ENCODE measurements at regions of chr11 and their contacts with region 1.

Region 1: GRCh38 chr11:9663699-9664275 is at the start of gene SWAP70:
- DNase-seq: peak; percentile 91
- H3K4me3 ChIP-seq: peak within 1 kb of the TSS; percentile 96
- H3K27ac ChIP-seq: peak within 1 kb of the TSS; percentile 97
- H3K4me1 ChIP-seq: peaks cover 37% of the 10 kb centered on the region
- H3K27me3 ChIP-seq: no peaks in the 10 kb centered on the region
- CTCF ChIP-seq: peak; percentile 74
- total RNA-seq, gene SWAP70: 20.6 TPM

Region 2: GRCh38 chr11:9716275-9717039 is 52.7 kb after region 1 on chr11:
- intact Hi-C with region 1: loop called (anchors 10 kb)
- DNase-seq: no peak
- H3K4me3 ChIP-seq: no peak overlapping the region
- H3K27ac ChIP-seq: peak overlapping the region; percentile 82
- H3K4me1 ChIP-seq: peaks cover 75% of the 10 kb centered on the region
- H3K27me3 ChIP-seq: no peaks in the 10 kb centered on the region
- CTCF ChIP-seq: no peak

Measured in left ventricle myocardium inferior (tissue), 1 donor.